Gastrocnemius medialis (tissue), 4 donors: ENCODE measurements at regions of chr3 and their contacts with region 1.

Region 1: GRCh38 chr3:53160660-53161449 is at the start of gene PRKCD:
- DNase-seq: peak; percentile 71 to 85
- ATAC-seq: peak; percentile 82 to 87
- H3K4me3 ChIP-seq: peak within 1 kb of the TSS; percentile 80 to 91 (median 83)
- H3K27ac ChIP-seq: peak within 1 kb of the TSS; percentile 79 to 87 (median 83)
- H3K4me1 ChIP-seq: peaks cover 17 to 20% of the 10 kb centered on the region in 2 donors
- H3K27me3 ChIP-seq: no peaks in the 10 kb centered on the region
- CTCF ChIP-seq: peak in 4 of 5 experiments; percentile 55 to 68 (median 63)
- POLR2A ChIP-seq: peak; percentile 67 to 80
- total RNA-seq, gene PRKCD: 2.1 to 5.9 (median 3.4) TPM

Region 2: DNA sequence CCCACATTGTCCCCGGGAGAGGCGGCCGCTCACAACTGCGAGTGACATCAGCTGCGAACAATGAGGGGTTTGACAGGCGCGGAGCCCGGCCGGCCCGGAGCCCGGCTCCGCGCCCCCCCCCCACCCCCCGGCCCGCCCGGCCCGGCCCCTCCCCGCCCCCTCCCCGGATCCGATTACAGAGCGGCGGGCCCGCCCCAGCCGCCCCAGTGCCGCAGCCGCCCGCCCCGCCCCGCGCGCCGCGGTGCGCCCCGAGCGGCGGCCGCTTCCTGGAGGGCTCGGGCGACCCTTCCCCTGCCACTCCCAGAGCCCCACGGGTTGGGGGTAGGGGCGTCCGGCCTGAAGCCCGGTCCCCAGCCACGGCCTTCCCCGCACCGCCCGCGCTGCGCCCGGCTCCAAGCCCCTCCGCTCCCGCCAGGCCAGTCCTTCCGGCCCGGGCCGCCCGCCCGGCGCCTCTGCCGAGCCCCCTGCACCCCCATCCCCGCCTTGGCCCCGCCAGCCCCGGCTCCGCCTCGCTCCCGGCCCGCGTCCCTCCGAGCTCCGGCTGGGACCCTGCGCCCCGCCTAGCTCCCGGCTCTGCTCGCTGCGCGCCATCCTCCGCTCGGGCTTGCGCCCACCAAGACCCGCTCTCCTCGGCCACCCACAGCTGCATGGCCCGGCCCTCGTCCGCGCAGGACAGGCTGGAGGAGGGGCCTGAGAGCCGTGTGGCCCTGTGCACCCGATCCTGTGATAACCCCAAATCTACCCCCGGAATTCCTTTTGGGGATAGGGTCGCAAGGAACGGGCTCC is 1193.3 kb before region 1 on chr3 and contains the start of gene PCBP4:
- in situ Hi-C with region 1: no loop called
- intact Hi-C with region 1: loop called (anchors 5 kb)
- DNase-seq: peak; percentile 58 to 68
- ATAC-seq: peak; percentile 55 to 63
- H3K4me3 ChIP-seq: peak within 1 kb of the TSS; percentile 64 to 85 (median 78)
- H3K27ac ChIP-seq: peak within 1 kb of the TSS; percentile 90 to 100 (median 94)
- H3K4me1 ChIP-seq: peaks cover 48 to 58% of the 10 kb centered on the region in 2 donors
- H3K27me3 ChIP-seq: no peaks in the 10 kb centered on the region
- CTCF ChIP-seq: no peak
- POLR2A ChIP-seq: peak; percentile 73 to 81
- total RNA-seq, gene PCBP4: 184 to 320 (median 199) TPM

Region 3: GRCh38 chr3:52299879-52300611 is 860.8 kb before region 1 on chr3:
- in situ Hi-C with region 1: no loop called
- intact Hi-C with region 1: no loop called
- DNase-seq: no peak
- ATAC-seq: no peak
- H3K4me3 ChIP-seq: no peak overlapping the region
- H3K27ac ChIP-seq: no peak overlapping the region
- H3K4me1 ChIP-seq: no peaks in the 10 kb centered on the region
- H3K27me3 ChIP-seq: no peaks in the 10 kb centered on the region
- CTCF ChIP-seq: no peak
- POLR2A ChIP-seq: no peak

Region 4: GRCh38 chr3:53083521-53083920 is 77.3 kb before region 1 on chr3:
- in situ Hi-C with region 1: no loop called
- intact Hi-C with region 1: no loop called
- DNase-seq: no peak
- ATAC-seq: no peak
- H3K4me3 ChIP-seq: no peak overlapping the region
- H3K27ac ChIP-seq: no peak overlapping the region
- H3K4me1 ChIP-seq: no peaks in the 10 kb centered on the region
- H3K27me3 ChIP-seq: no peaks in the 10 kb centered on the region
- CTCF ChIP-seq: no peak
- POLR2A ChIP-seq: no peak

Region 5: GRCh38 chr3:53195602-53196574 is 35.0 kb after region 1 on chr3:
- in situ Hi-C with region 1: no loop called
- intact Hi-C with region 1: loop called (anchors 2 kb)
- DNase-seq: no peak
- ATAC-seq: peak; percentile 60 to 77
- H3K4me3 ChIP-seq: no peak overlapping the region
- H3K27ac ChIP-seq: no peak overlapping the region
- H3K4me1 ChIP-seq: peaks cover 13% of the 10 kb centered on the region in 2 donors
- H3K27me3 ChIP-seq: no peaks in the 10 kb centered on the region
- CTCF ChIP-seq: peak; percentile 89 to 100 (median 98)
- POLR2A ChIP-seq: no peak

Region 6: GRCh38 chr3:53211706-53212702 is 51.1 kb after region 1 on chr3:
- in situ Hi-C with region 1: no loop called
- intact Hi-C with region 1: no loop called
- DNase-seq: no peak
- ATAC-seq: no peak
- H3K4me3 ChIP-seq: no peak overlapping the region
- H3K27ac ChIP-seq: no peak overlapping the region
- H3K4me1 ChIP-seq: no peaks in the 10 kb centered on the region
- H3K27me3 ChIP-seq: no peaks in the 10 kb centered on the region
- CTCF ChIP-seq: no peak
- POLR2A ChIP-seq: no peak